Dorsolateral prefrontal cortex (tissue), 120 donors: ENCODE measurements at regions of chr12 and their contacts with region 1.

Region 1: DNA sequence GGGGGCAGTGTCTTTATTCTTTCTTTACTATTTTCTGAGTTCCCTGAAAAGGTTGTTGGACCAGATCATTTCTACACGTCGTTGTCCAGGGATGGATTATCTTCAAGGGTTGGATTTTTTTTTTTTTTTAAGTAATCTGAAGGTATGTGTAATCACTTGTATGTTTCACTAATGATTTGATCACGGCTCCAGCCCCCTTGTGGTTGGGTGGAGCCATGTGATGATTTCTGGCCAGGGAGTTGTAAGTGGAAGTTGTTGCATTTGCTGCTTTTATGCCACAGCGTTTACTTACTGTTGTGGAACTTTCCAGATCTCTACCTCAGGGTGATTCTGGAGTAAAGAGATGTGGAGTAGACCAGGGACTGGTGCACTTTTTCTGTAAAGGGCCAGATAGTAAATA is 390.3 kb downstream of the AACS start:
- DNase-seq: no peak
- H3K4me3 ChIP-seq: peak overlapping the region in 18 of 59 donors; percentile 0 to 25 (median 6)
- H3K27ac ChIP-seq: peak overlapping the region; percentile 11 to 98 (median 92)
- H3K27me3 ChIP-seq: no peaks in the 10 kb centered on the region
- CTCF ChIP-seq: peak in 35 of 56 donors; percentile 9 to 52 (median 28)

Region 2: DNA sequence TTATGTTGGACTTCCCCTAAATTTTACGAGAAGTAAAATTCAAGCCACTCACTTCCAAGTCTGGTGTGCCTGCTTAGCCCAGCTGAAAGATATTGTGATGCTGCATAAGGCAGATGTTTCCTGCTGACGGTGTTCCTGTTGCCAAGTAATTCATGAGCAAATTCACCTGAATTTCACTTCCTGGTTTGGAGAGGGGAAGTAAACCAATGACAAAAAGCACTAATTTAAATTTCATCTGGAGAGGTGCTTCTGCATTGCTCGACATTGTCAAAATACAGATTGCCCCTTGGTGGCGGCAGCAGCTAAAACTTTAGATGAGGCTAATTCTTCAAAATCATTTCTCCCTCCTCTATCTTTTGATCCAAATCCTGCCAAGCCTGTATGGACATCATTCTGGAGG is 109.2 kb before region 1 on chr12:
- intact Hi-C with region 1: loop called in 1 of 2 experiments (anchors 5 kb)
- DNase-seq: peak in 6 of 10 donors; percentile 40 to 67 (median 53)
- H3K4me3 ChIP-seq: no peak overlapping the region
- H3K27ac ChIP-seq: peak overlapping the region in 9 of 59 donors; percentile 10 to 68 (median 37)
- H3K27me3 ChIP-seq: no peaks in the 10 kb centered on the region
- CTCF ChIP-seq: peak in 55 of 56 donors; percentile 32 to 75 (median 59)

Region 3: GRCh38 chr12:125528281-125528680 is 72.7 kb after region 1 on chr12:
- intact Hi-C with region 1: loop called (anchors 1 to 5 kb)
- DNase-seq: peak in 9 of 10 donors; percentile 23 to 83 (median 60)
- H3K4me3 ChIP-seq: peak overlapping the region in 1 of 59 donors; percentile 31
- H3K27ac ChIP-seq: peak overlapping the region in 58 of 59 donors; percentile 52 to 99 (median 93)
- H3K27me3 ChIP-seq: no peaks in the 10 kb centered on the region
- CTCF ChIP-seq: peak in 18 of 56 donors; percentile 7 to 51 (median 25)